ENCODE measurements at regions of chr5 and their contacts with region 1.

Region 1: GRCh38 chr5:42908509-42909488 is 97.1 kb upstream of the SELENOP start:
- DNase-seq: peak; percentile 75 to 92
- H3K4me3 ChIP-seq: peak overlapping the region; percentile 28; the same call in 1 of the 2 replicates
- H3K27ac ChIP-seq: no peak overlapping the region
- H3K4me1 ChIP-seq: 0 out of 2 replicates have a peak, but pooled peaks cover 13% of the 10 kb centered on the region
- H3K27me3 ChIP-seq: peaks cover 10% of the 10 kb centered on the region; the same call in 1 of the 2 replicates
- CTCF ChIP-seq: peak; percentile 94

Region 2: GRCh38 chr5:43000111-43000845 is 91.5 kb after region 1 on chr5:
- CTCF ChIA-PET with region 1: interaction called, 6 read pairs
- POLR2A ChIA-PET with region 1: no interaction called
- intact Hi-C with region 1: loop called (anchors 2 kb)
- DNase-seq: peak; percentile 69 to 81
- H3K4me3 ChIP-seq: peak overlapping the region; percentile 55
- H3K27ac ChIP-seq: peak overlapping the region; percentile 59
- H3K4me1 ChIP-seq: peaks cover 29% of the 10 kb centered on the region
- H3K27me3 ChIP-seq: no peaks in the 10 kb centered on the region
- CTCF ChIP-seq: no peak

Region 3: DNA sequence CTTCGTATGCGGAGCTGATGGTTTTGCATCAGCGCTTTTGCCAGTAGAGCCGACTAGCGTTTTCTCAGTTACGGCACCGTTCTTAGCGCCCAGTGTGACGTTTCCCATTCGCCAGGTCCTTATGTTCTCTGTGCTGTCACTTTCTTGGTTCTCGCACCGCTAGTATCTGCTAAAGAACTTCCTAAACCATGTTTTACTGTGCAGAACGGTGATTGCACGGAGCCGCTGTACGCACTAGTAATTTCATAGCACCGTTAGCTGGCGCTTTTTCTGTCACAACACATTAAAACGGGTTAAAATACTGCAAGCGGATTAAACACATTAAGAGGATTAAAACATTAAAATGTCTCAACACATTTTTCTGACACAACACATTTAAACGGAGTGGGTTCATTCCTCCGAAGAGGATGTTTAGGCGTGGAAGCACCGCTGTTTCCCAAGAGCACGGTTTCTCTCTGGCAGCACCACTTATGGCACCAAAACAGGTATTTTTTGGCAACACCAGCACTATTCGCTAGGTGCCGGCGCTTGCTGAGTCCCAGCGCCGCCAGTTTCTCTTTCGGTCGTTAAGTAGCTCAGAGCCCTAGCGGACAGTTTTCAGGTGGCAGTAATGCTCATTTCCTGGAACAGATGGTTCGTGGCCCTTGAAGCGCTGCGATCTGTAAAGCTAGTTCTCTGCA is 111.0 kb after region 1 on chr5:
- CTCF ChIA-PET with region 1: interaction called, 13 read pairs
- POLR2A ChIA-PET with region 1: interaction called, 21 read pairs
- intact Hi-C with region 1: loop called (anchors 1 kb)
- DNase-seq: peak; percentile 80 to 83
- H3K4me3 ChIP-seq: peak overlapping the region; percentile 50
- H3K27ac ChIP-seq: no peak overlapping the region
- H3K4me1 ChIP-seq: no peaks in the 10 kb centered on the region
- H3K27me3 ChIP-seq: no peaks in the 10 kb centered on the region
- CTCF ChIP-seq: peak; percentile 61; the same call in 1 of the 2 replicates

Region 4: DNA sequence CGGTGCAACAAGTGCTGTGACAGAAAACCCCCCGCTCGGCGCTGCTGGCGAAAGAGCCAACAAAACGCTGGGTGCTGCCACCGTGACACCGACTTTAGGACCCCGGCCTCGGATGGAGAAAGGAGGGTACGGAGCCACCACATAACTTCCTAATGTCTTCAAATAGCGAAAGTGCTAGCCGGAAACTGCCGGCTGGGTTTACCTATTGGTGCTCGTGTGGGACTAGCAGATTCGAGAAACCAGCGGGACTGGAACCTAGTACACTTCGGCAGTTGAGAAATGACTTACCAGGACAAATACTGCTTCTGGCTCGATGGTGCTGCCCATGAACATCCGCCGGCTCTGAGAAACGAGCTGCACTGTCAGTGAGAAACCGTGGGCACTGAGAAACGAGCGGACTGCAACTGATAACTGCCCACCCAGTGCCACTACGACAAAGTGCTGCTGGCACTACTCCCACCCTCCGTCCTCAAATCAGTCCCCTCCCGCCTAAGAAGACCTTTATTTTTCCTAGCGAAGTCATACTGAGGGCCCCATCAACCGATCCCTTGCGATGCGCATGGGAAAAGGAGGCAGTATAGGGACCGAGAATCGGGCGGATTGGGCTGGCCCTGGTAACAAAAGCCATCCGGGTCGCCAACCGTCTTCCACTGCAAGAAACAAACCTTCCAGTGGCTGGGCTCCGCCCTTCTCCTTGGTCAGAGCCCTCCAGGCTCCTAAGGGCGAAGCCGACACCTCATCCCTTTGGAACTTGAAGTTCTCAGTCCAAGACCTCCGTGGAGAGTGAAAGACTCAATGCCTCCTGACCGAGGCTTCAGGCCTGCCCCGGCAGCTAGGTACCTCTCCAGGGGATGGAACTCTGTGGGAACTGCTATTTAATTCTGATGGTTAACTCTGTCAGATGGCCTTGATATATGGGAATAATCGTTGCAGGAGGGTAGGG is 158.3 kb after region 1 on chr5:
- CTCF ChIA-PET with region 1: interaction called, 10 read pairs
- POLR2A ChIA-PET with region 1: interaction called, 8 read pairs
- intact Hi-C with region 1: loop called (anchors 1 kb)
- DNase-seq: peak; percentile 91 to 93
- H3K4me3 ChIP-seq: peak overlapping the region; percentile 75
- H3K27ac ChIP-seq: peak overlapping the region; percentile 84
- H3K4me1 ChIP-seq: peaks cover 27% of the 10 kb centered on the region
- H3K27me3 ChIP-seq: no peaks in the 10 kb centered on the region
- CTCF ChIP-seq: no peak

Region 5: DNA sequence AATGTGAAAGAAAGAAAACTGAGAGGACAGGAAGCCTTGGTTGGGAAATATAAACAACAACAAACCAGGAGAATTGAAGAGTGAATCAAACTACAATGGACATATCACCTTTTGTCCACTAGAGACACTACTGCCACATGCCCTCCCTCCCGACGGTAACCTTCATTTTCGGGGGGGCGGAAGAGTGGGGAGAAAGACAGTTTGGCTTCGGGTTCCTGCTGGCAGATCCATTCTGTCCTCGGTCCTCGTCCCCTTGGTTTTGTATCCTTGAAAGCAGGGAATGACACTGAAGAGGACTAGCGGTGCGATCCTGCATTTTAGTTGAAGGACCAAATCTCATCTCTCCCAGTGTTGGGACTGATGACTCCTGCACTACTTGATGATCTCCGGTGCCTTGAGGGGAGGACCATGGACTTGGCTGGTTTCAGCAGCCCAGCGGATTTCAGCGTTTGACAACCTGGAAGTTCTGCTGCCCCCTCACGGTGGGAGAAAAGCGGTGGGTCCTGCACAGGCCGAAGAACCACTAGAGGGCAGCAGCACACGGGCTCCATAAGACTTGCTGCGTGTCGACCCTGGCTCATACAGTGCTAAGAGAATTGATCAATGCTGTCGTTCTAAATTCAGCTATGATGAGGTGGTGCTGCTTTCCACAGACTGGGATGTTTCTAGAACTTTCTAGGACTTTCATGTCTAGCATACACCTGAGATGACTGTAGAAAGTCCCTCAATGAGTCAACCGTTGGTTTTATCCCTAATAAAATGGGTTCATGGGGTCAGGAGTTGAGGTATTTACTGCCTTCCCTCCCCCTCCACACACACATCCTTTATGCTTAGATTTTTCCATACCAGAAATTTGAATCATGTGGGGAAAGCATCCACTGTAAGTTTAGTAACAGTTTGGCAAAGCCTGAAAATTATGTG is 196.8 kb after region 1 on chr5:
- CTCF ChIA-PET with region 1: interaction called, 8 read pairs
- POLR2A ChIA-PET with region 1: no interaction called
- intact Hi-C with region 1: loop called (anchors 1 kb)
- DNase-seq: peak; percentile 90 to 96
- H3K4me3 ChIP-seq: peak overlapping the region; percentile 51
- H3K27ac ChIP-seq: no peak overlapping the region
- H3K4me1 ChIP-seq: peaks cover 8% of the 10 kb centered on the region; the same call in 1 of the 2 replicates
- H3K27me3 ChIP-seq: no peaks in the 10 kb centered on the region
- CTCF ChIP-seq: peak; percentile 100

Region 6: DNA sequence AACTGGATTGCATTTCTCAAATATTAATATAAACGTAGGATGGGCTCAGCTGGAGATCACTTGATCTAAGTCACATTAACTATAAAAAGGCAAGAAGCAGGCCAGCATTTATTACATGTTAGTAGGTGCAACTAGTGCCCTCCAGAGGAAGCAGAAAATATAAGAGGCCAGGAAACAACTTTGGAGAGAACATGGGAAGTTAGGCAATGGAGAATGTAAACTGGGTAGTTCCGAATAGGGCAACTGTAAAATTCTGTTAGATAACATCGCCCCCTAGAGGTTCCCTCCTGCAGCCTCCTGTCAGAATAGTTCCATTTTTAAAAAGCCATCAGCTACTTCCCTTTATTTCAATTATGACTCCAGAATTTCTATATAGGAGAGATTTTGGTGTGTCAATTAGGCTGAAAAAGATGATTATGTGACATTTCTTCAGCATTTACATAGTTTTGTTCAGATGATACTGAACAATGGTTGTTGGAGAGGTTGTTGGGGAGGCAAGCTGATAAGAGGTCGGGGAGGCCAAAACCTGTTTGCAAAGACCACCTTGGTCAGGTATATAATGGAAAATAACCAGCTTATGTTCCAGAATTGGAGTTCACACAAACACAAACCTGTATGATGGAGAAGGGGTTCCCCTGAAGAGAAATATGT is 481.0 kb after region 1 on chr5:
- CTCF ChIA-PET with region 1: interaction called, 7 read pairs
- POLR2A ChIA-PET with region 1: no interaction called
- intact Hi-C with region 1: loop called (anchors 1 kb)
- DNase-seq: peak; percentile 73 to 91
- H3K4me3 ChIP-seq: no peak overlapping the region
- H3K27ac ChIP-seq: no peak overlapping the region
- H3K4me1 ChIP-seq: 0 out of 2 replicates have a peak, but pooled peaks cover 5% of the 10 kb centered on the region
- H3K27me3 ChIP-seq: no peaks in the 10 kb centered on the region
- CTCF ChIP-seq: peak; percentile 99

Measured in PC-9 (cell line).